ENCODE measurements at regions of chr17 and their contacts with region 1.

Region 1: GRCh38 chr17:49788478-49789242 is at the start of gene KAT7:
- DNase-seq: peak; percentile 100
- ATAC-seq: peak; percentile 97 to 98
- H3K4me3 ChIP-seq: peak within 1 kb of the TSS; percentile 83
- H3K27ac ChIP-seq: peak within 1 kb of the TSS; percentile 99
- H3K4me1 ChIP-seq: peaks cover 2% of the 10 kb centered on the region
- H3K27me3 ChIP-seq: no peaks in the 10 kb centered on the region
- total RNA-seq, gene KAT7: 55.8 to 68.2 (median 57.2) TPM

Region 2: DNA sequence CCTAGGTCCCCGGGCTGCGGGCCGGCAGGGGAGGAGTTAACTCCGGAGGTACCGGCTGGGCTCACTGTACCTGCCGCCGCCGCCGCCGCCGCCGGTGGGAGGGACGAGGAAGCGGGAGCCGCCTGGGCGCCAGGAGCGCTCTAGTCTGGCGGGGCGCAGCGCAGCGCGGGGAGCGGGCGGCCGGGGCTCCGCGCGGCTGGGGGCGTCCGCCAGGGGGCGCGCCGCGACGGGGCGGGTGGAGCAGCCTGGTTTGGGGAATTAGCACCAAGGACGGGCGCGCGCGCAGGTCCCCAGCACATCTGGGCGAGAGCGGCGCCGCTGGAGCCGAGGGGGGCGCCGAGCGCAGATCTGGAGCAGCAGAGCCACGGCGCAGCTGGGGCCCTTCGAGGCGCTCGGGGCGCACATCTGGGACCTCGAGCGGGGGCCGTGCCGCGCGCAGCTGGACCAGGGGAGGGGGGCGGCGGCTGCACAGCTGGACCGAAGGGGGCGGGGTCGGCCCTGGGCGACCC is 213.0 kb before region 1 on chr17 and contains the start of gene NXPH3:
- intact Hi-C with region 1: loop called in 2 of 4 experiments (anchors 10 kb)
- DNase-seq: peak; percentile 72 to 91 (median 89)
- ATAC-seq: peak; percentile 47 to 51
- H3K4me3 ChIP-seq: peak within 1 kb of the TSS; percentile 72
- H3K27ac ChIP-seq: peak within 1 kb of the TSS; percentile 66
- H3K4me1 ChIP-seq: peaks cover 5% of the 10 kb centered on the region
- H3K27me3 ChIP-seq: no peaks in the 10 kb centered on the region
- total RNA-seq, gene NXPH3: 3.8 to 6.5 (median 4.9) TPM

Region 3: DNA sequence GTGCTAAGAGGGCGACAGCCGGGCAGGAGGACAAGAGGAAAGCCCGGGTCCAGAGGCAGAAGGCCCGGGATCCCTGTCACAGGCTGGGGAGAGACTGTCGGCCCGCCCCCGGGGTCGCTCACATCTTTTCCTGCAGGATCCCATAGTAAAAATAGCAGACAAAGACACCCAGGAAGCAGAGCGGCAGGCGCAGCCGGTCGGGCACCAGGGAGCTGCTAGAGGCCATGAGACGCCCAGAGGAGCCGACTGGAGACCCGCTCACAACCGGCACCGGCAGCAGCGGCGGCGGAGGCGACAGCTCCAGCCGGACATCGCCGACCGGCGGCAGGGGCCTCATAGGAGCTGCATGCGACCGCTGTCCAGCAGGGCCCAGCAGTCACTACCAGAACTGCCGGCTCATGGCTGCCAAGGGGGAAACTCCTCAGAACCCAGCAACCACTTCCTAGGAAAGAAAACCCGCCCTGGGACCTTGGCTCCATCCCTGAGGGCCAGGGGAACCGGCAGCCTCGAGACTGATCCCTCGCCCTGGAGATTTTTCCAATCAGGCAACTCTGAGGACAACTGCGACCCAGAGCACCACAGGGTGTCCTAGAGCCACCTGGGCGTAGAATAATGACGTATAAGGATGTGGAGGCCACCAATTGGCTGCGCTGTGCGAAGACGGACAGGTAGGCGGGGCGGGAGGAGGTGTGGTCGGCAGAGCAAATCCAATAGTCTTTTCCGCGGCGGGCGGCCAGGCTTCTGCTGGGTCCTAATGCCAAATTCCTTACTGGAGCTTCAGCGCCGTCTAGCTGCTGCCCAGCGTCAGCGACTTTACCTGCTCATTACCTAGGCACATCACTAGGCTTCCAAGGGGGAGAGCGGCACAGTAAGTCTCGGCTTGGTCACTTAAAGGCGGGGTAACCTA is 80.8 kb before region 1 on chr17 and contains the start of gene SLC35B1:
- intact Hi-C with region 1: loop called in 1 of 4 experiments (anchors 5 kb)
- DNase-seq: peak; percentile 99 to 100 (median 100)
- ATAC-seq: peak; percentile 99
- H3K4me3 ChIP-seq: peak within 1 kb of the TSS; percentile 92
- H3K27ac ChIP-seq: peak within 1 kb of the TSS; percentile 96
- H3K4me1 ChIP-seq: peaks cover 3% of the 10 kb centered on the region
- H3K27me3 ChIP-seq: no peaks in the 10 kb centered on the region
- total RNA-seq, gene SLC35B1: 48.6 to 75.5 (median 56.2) TPM

Region 4: GRCh38 chr17:49723423-49723822 is 65.2 kb before region 1 on chr17:
- intact Hi-C with region 1: no loop called
- DNase-seq: peak; percentile 70 to 92 (median 90)
- ATAC-seq: peak; percentile 78 to 88
- H3K4me3 ChIP-seq: no peak overlapping the region
- H3K27ac ChIP-seq: peak overlapping the region; percentile 71
- H3K4me1 ChIP-seq: peaks cover 23% of the 10 kb centered on the region
- H3K27me3 ChIP-seq: no peaks in the 10 kb centered on the region

Region 5: GRCh38 chr17:49880291-49881053 is 91.8 kb after region 1 on chr17:
- intact Hi-C with region 1: no loop called
- DNase-seq: peak; percentile 75 to 90 (median 87)
- ATAC-seq: peak; percentile 91 to 92
- H3K4me3 ChIP-seq: no peak overlapping the region
- H3K27ac ChIP-seq: no peak overlapping the region
- H3K4me1 ChIP-seq: no peaks in the 10 kb centered on the region
- H3K27me3 ChIP-seq: no peaks in the 10 kb centered on the region